HCT116 (cell line): ENCODE measurements at regions of chr3 and their contacts with region 1.

Region 1: DNA sequence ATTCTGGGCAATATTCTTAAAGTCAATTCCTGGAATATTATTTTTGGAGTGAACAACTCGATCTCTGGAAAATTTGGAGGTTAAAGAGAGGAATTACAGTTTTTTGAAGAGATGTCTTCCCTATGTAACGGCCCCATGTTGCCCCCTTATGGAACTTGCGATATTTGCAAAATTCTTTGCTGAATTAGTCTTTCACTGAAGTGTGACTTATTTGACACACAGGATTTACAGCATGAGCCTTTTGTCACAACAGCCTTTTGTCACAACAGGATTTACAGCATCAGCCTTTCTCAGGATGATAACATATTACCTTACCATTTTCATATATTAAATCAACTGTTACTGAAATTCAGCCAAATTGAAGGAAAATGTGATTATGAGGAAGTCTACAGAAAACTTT is 37.8 kb upstream of the SPTSSB start:
- DNase-seq: peak; percentile 49
- ATAC-seq: peak; percentile 87
- H3K4me3 ChIP-seq: no peak overlapping the region
- H3K27ac ChIP-seq: no peak overlapping the region
- H3K4me1 ChIP-seq: no peaks in the 10 kb centered on the region
- H3K27me3 ChIP-seq: no peaks in the 10 kb centered on the region
- CTCF ChIP-seq: peak; percentile 57 to 88 (median 80)
- POLR2A ChIP-seq: no peak
- RAD21 ChIP-seq: peak; percentile 89

Region 2: GRCh38 chr3:160707187-160707794 is 701.8 kb before region 1 on chr3:
- CTCF ChIA-PET with region 1: no interaction called
- POLR2A ChIA-PET with region 1: no interaction called
- RAD21 ChIA-PET with region 1: no interaction called
- intact Hi-C with region 1: loop called (anchors 5 kb)
- DNase-seq: peak; percentile 37
- ATAC-seq: peak; percentile 92
- H3K4me3 ChIP-seq: no peak overlapping the region
- H3K27ac ChIP-seq: no peak overlapping the region
- H3K4me1 ChIP-seq: no peaks in the 10 kb centered on the region
- H3K27me3 ChIP-seq: no peaks in the 10 kb centered on the region
- CTCF ChIP-seq: peak; percentile 46 to 74 (median 59); a peak in 5 of 6 replicates
- POLR2A ChIP-seq: no peak
- RAD21 ChIP-seq: peak; percentile 87

Region 3: GRCh38 chr3:161171113-161171512 is 238.0 kb before region 1 on chr3:
- CTCF ChIA-PET with region 1: no interaction called
- POLR2A ChIA-PET with region 1: no interaction called
- RAD21 ChIA-PET with region 1: no interaction called
- intact Hi-C with region 1: no loop called
- DNase-seq: no peak
- ATAC-seq: no peak
- H3K4me3 ChIP-seq: no peak overlapping the region
- H3K27ac ChIP-seq: no peak overlapping the region
- H3K4me1 ChIP-seq: peaks cover 0 to 3% of the 10 kb centered on the region in 2 experiments; a peak in 2 of 4 replicates
- H3K27me3 ChIP-seq: no peaks in the 10 kb centered on the region
- CTCF ChIP-seq: no peak
- POLR2A ChIP-seq: no peak
- RAD21 ChIP-seq: no peak

Region 4: GRCh38 chr3:161745741-161746140 is 336.7 kb after region 1 on chr3:
- CTCF ChIA-PET with region 1: no interaction called
- POLR2A ChIA-PET with region 1: no interaction called
- RAD21 ChIA-PET with region 1: no interaction called
- intact Hi-C with region 1: no loop called
- DNase-seq: no peak
- ATAC-seq: no peak
- H3K4me3 ChIP-seq: no peak overlapping the region
- H3K27ac ChIP-seq: no peak overlapping the region
- H3K4me1 ChIP-seq: no peaks in the 10 kb centered on the region
- H3K27me3 ChIP-seq: no peaks in the 10 kb centered on the region
- CTCF ChIP-seq: no peak
- POLR2A ChIP-seq: no peak
- RAD21 ChIP-seq: no peak